ENCODE measurements at regions of chr12 and their contacts with region 1.

Region 1: DNA sequence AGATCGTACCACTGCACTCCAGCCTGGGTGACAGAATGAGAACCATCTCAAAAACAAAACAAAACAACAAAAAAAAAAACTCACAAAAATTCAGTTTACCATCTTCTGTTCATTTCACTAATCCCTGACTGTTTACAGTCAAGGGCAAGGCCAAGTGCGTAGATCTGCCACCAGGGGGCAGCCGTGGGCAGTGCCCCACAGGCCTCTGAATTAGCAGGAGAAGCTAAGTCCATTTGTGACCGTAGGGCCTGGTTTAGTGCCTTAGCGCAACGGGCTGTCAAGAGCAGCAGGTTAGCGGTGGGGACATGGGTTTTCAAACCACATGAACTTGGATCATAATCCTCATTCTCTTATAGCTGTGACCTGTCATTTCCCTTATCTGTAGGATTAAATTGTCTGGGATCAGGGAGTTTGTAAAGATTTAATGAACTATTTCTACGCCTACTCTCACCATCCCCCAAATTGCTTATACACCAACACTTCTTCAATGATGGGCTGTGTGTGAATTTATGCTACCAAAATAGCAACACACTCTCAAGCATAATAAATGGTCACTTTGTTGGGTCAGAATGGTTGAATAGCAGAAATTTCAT is 49.0 kb downstream of the KCTD10 start:
- DNase-seq: no peak
- H3K4me3 ChIP-seq: no peak overlapping the region
- CTCF ChIP-seq: peak; percentile 95

Region 2: DNA sequence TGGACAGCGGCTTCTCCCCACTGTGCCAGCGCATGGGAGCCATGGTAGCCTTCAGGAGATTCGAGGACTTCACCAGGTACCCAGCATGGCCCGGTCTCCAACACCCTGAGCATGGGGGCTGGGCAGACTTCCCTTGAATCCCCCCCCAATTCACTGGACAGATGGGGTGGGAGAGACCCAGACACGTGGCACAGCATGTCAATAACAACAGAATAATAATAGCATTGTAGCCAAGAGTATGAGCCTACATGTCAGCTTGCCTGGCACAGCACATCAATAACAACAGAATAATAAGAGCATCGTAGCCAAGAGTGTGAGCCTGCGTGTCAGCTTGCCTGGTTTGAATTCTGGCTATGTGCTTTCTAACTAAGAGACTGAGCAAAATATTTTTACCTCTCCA is 195.4 kb before region 1 on chr12:
- CTCF ChIA-PET with region 1: no interaction called
- POLR2A ChIA-PET with region 1: no interaction called
- DNase-seq: no peak
- H3K4me3 ChIP-seq: no peak overlapping the region
- CTCF ChIP-seq: no peak

Region 3: GRCh38 chr12:109477185-109477962 is 49.2 kb after region 1 on chr12 and contains the starts of genes KCTD10 and UBE3B:
- CTCF ChIA-PET with region 1: interaction called, 199 read pairs
- POLR2A ChIA-PET with region 1: interaction called, 5 read pairs
- DNase-seq: no peak
- H3K4me3 ChIP-seq: peak within 1 kb of the TSS; percentile 95
- CTCF ChIP-seq: no peak

Region 4: DNA sequence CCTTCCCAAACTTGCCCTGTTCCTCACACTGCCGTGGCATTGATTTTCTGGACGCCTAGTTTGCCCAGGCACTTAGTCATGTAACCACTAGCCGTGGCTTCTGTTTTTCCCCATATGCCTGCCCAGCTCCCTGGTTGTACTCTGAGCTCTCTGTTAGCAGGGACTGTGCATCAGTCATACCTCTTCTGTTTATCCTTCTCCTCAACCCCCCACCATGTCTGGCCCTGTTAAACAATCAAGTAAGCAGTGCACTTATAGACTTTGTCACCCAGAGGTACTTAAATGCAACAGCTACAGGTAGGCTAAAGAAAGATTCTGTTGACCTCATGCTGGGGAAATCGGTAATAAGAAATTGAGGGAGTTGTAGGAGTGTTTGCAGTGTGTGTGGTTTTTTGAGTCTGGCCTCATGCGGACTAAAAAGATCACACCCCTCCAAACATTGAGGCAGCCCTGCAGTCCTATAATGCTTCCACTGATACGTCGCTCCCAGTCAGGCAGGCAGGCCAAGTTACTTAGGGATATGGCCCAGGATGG is 66.3 kb after region 1 on chr12:
- CTCF ChIA-PET with region 1: interaction called, 10 read pairs
- POLR2A ChIA-PET with region 1: no interaction called
- DNase-seq: no peak
- H3K4me3 ChIP-seq: no peak overlapping the region
- CTCF ChIP-seq: no peak

Region 5: DNA sequence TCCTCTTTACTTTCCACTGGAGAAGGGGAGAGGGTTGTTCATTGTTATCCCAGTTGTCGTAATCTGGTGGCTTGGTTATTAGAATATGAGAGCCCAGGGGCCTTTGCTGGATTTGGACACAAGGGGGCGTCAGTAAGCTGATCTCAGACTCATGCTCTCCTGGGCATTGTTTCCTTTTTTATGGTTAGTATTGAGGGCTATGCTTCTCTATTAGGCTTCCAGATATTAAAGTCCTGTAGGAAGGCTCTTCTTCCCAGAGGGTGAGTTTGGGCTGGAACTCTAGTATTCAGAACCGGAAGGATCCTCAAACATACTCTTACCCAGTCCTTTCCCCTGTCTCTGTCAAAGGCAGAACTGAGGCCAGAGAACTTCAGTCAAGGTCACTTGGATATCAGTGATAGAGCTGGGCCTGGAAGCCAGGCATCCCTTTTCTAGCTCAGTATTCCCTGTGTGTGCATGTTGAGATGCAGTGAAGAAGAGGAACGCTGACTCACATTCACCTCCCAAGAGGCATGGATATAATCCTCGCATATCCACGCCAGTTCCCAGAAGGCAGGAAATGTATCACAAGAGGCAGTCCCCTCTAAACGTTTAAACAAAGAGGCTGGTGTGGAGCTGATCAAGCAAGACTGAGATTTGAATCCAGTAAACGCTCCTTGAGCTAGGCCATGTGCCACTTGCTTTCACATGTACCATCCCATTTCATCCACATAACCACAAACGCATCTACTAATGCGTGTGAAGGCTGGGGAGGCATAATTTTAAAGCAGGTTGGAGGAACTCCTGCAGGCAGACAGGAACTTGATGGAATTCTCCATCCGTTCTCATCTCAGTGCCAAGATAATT is 90.9 kb after region 1 on chr12:
- CTCF ChIA-PET with region 1: interaction called, 16 read pairs
- POLR2A ChIA-PET with region 1: no interaction called
- DNase-seq: peak; percentile 67
- H3K4me3 ChIP-seq: no peak overlapping the region
- CTCF ChIP-seq: peak; percentile 77

Region 6: DNA sequence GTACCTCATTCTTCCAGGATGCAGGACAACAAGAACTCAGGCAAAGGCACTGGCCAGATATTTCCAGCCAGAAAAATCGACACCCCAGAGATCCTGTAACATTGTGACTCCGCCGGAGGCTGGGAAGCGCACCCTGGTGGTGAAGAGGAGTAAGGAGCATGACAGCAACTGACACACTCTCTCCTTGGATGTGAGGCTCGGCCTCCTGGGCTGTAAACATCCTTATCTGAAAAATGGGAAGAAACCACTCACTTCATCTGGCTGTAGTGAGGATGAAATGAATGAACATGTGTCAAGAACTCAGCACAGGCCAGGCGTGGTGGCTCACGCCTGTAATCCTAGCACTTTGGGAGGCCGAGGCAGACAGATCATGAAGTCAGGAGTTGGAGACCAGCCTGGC is 499.5 kb after region 1 on chr12:
- CTCF ChIA-PET with region 1: no interaction called
- POLR2A ChIA-PET with region 1: no interaction called
- DNase-seq: no peak
- H3K4me3 ChIP-seq: no peak overlapping the region
- CTCF ChIP-seq: peak; percentile 75